Activated CD8-positive, alpha-beta T cell treated with anti-CD3 and anti-CD28 coated beads for 36 hours (primary cell): ENCODE measurements at regions of chr6 and their contacts with region 1.

Region 1: GRCh38 chr6:53426667-53427270 is 78.0 kb upstream of the ELOVL5 start:
- DNase-seq: no peak
- ATAC-seq: peak; percentile 87
- H3K4me3 Mint-ChIP-seq: no peak overlapping the region
- H3K27ac Mint-ChIP-seq: peak overlapping the region; percentile 49
- H3K4me1 Mint-ChIP-seq: peaks cover 37% of the 10 kb centered on the region
- H3K27me3 Mint-ChIP-seq: peaks cover 7% of the 10 kb centered on the region
- CTCF ChIP-seq: no peak

Region 2: DNA sequence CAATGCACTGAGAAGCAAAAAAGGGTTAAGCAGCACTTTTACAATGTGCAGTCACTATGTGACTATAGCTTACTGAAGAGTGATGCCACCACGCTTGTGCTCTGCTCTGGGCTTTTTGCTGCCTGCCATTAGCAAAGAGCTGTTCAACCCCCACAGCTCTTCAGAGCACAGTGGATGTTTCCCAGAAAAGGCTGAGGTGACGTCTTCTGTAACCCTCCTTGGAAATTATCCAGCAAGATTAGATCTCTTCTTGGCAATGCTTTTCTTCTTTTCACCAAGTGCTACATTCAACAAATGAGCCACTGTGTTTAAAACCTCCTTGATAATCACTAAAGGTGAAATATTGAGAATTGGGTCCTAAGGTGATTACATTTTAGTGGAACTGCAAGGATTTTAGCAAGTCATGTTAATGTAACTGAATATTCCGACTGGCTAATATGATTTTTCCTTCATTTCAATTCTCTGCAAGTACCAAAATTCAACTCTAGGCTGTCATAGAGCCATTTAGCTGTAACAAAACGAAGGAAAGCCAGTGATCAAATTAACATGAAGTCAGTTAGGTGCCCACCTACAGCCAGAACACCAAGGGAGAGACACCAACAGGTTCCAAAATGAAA is 112.9 kb before region 1 on chr6:
- CTCF ChIA-PET with region 1: no interaction called
- POLR2A ChIA-PET with region 1: no interaction called
- intact Hi-C with region 1: loop called (anchors 10 kb)
- DNase-seq: no peak
- ATAC-seq: no peak
- H3K4me3 Mint-ChIP-seq: no peak overlapping the region
- H3K27ac Mint-ChIP-seq: no peak overlapping the region
- H3K4me1 Mint-ChIP-seq: peaks cover 79% of the 10 kb centered on the region
- H3K27me3 Mint-ChIP-seq: no peaks in the 10 kb centered on the region
- CTCF ChIP-seq: no peak

Region 3: GRCh38 chr6:53375847-53376246 is 50.9 kb before region 1 on chr6:
- CTCF ChIA-PET with region 1: no interaction called
- POLR2A ChIA-PET with region 1: no interaction called
- intact Hi-C with region 1: no loop called
- DNase-seq: no peak
- ATAC-seq: no peak
- H3K4me3 Mint-ChIP-seq: no peak overlapping the region
- H3K27ac Mint-ChIP-seq: no peak overlapping the region
- H3K4me1 Mint-ChIP-seq: no peaks in the 10 kb centered on the region
- H3K27me3 Mint-ChIP-seq: no peaks in the 10 kb centered on the region
- CTCF ChIP-seq: no peak